ENCODE measurements at regions of chr2 and their contacts with region 1.

Region 1: DNA sequence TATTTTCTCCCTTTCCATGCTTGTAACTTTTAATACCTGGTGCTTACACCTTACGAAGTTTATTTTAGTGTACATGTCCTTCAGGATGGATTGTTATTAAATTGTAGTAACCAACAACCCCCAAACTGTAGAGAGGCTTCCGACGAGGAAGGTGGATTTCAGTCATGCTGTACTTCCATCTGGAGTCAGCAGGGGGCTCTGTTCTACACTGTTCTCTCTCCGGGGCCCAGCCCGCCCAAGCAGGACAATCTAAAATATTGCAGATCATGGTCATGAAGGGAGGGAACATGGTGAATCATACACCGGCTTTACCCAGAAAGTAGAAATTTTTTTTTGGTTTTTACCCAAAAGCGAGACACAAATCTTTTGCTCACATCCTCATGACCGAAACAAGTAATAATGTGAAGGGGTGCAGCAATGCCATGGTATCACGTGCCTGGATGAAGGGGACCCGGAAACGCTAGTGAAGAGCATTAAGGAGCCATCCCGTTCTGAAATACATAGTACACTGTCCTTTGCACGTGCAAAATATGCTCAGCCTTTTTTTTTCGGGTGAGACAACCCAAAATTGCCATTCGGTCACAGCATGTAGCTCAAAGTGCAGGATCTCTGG is 884.8 kb downstream of the EPHA4 start:
- DNase-seq: peak; percentile 39 to 78
- ATAC-seq: peak; percentile 83

Region 2: GRCh38 chr2:220855296-220855695 is 168.0 kb after region 1 on chr2:
- intact Hi-C with region 1: no loop called
- DNase-seq: no peak
- ATAC-seq: no peak

Region 3: DNA sequence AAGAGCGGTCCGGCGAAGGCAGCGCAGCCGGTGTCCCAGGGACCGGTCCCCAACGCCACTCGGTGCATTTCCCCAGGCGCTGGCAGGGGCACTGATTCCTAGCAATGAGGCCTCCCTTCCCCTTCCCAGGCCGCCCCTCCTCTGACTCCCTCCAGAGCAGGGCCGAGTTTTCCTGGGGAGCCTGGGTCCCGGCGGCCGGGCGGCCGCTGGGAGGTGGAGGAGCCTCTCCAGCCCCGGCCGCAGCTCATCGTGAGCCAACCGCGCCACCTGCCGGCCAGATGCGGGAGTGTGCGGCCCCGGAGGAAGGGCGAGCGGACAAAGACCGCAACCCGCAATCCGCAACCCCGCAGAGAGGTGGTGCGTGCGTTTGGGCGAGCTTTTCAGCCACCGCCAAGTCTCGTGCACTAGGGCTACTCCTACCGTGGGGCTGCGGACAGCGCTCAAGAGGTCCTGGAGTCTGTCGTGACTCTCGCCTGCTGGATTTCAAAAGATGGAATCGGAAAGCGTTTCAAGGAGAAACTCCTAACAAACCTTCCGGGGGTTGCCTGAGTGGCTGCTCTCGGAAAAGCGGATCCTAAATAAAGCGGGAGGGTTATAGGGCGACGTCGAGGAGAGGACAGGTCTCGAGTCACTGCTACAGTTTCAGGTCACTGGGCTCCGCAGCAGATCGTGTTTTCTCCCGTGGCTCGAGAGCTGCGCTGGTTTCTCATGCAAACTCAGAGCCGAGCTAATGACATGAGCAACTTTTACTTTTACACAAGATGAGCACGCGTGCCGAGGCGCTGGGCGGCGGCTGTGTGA is 886.3 kb after region 1 on chr2:
- intact Hi-C with region 1: loop called in 1 of 2 experiments (anchors 2 kb)
- DNase-seq: peak; percentile 66 to 90
- ATAC-seq: peak; percentile 69

Region 4: GRCh38 chr2:222000326-222000725 is 1313.0 kb after region 1 on chr2:
- intact Hi-C with region 1: no loop called
- DNase-seq: no peak
- ATAC-seq: no peak